Activated CD4-positive, alpha-beta memory T cell treated with anti-CD3 and anti-CD28 coated beads for 36 hours (primary cell): ENCODE measurements at regions of chr15 and their contacts with region 1.

Region 1: GRCh38 chr15:73936181-73936580 is 9.9 kb downstream of the LOXL1 start:
- DNase-seq: no peak
- H3K4me3 Mint-ChIP-seq: no peak overlapping the region
- H3K27ac Mint-ChIP-seq: no peak overlapping the region
- H3K4me1 Mint-ChIP-seq: peaks cover 11% of the 10 kb centered on the region
- H3K27me3 Mint-ChIP-seq: no peaks in the 10 kb centered on the region

Region 2: DNA sequence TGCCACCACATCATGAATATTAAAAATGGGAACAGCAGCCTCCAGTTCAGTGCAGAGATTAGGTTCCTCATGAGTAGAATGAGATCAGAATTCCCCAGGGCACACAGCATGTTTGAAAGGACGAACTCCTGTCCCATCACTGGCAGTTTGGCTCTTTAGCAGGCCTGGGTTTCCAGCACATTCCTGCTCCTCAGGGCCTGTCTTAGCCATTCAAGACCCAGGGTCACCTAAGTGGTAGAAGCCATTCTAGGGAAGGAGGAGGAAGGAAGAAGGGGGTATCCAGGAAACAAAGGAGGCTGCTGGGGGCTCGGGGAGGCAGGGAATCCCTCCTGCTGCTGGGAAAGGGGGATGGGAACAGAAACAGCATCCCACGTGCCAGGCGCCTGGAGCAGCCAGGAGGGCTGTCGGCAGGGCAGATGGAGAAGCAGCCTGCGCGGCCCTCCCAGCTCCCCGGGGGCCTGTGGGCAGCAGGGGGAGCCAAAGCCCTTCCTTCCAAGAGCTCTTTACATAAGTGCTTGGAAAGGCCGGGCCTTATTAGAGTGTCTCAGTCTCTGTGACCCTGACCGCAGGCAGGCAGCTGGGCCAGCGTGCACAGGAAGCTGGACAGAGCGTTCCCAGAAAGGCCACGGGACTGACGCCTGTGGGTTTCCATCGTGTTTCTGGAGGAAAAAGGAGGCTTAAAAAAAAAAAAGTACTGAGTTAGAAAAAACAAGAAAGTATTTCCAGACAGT is 14.8 kb after region 1 on chr15:
- CTCF ChIA-PET with region 1: interaction called, 10 read pairs
- POLR2A ChIA-PET with region 1: interaction called, 3 read pairs
- intact Hi-C with region 1: no loop called
- DNase-seq: peak; percentile 81
- H3K4me3 Mint-ChIP-seq: no peak overlapping the region
- H3K27ac Mint-ChIP-seq: peak overlapping the region; percentile 52
- H3K4me1 Mint-ChIP-seq: peaks cover 6% of the 10 kb centered on the region
- H3K27me3 Mint-ChIP-seq: no peaks in the 10 kb centered on the region

Region 3: DNA sequence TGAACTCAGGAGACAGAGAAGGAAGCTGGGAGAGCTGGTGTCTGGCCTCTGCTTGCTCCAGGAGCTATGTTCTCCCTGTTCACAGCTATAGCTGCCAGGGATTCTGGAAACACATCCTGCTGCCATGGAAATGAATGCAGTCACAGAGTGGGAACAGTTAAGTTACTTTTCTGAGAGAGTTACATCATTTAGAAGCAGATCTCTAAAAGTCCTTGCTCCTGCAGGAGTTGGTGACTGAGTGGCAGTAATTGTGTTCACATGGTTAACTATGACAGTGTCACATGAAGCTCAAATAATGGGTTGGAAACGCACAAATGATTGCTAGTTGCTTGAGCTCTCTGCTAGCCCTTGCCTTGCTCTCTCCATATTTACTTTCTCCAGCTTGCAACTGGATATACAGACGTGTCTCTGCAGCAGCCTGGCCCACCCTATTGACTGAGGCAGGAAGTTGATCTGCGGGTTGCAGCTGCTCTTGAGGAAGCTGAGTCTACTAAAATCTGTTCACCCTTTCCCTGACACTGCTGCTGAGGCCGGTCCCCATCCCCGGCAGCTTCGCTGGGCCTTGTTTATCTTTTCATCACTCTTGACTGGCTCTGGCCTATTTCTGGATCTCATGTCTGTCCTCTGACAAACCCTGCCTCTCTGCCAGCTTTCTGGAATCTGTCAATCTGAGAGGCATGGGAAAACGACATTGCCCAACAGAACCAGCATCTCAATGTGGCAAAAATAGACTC is 220.7 kb after region 1 on chr15:
- CTCF ChIA-PET with region 1: no interaction called
- POLR2A ChIA-PET with region 1: no interaction called
- intact Hi-C with region 1: no loop called
- DNase-seq: no peak
- H3K4me3 Mint-ChIP-seq: no peak overlapping the region
- H3K27ac Mint-ChIP-seq: no peak overlapping the region
- H3K4me1 Mint-ChIP-seq: peaks cover 19% of the 10 kb centered on the region
- H3K27me3 Mint-ChIP-seq: peaks cover 20% of the 10 kb centered on the region